ENCODE measurements at regions of chr6 and their contacts with region 1.

Region 1: GRCh38 chr6:31795616-31796298 is at the start of gene VARS1:
- DNase-seq: peak; percentile 90
- ATAC-seq: peak; percentile 89
- H3K4me3 ChIP-seq: peak within 1 kb of the TSS; percentile 89 to 98 (median 98)
- H3K27ac ChIP-seq: peak within 1 kb of the TSS; percentile 76
- H3K4me1 ChIP-seq: peaks cover 25% of the 10 kb centered on the region
- H3K27me3 ChIP-seq: no peaks in the 10 kb centered on the region; a peak in 1 of 5 replicates
- CTCF ChIP-seq: peak; percentile 98
- EP300 ChIP-seq: no peak
- POLR2A ChIP-seq: peak in 1 of 2 experiments; percentile 46; a peak in 1 of 4 replicates
- RAD21 ChIP-seq: peak; percentile 97
- total RNA-seq, gene VARS1: 56.1 and 59.2 TPM in 2 replicates

Region 2: GRCh38 chr6:31806465-31807272 is 10.9 kb after region 1 on chr6 and contains the start of gene LSM2:
- CTCF ChIA-PET with region 1: interaction called, 3 read pairs
- POLR2A ChIA-PET with region 1: interaction called, 77 read pairs
- in situ Hi-C with region 1: no loop called
- intact Hi-C with region 1: no loop called
- DNase-seq: peak; percentile 96
- ATAC-seq: peak; percentile 92
- H3K4me3 ChIP-seq: peak within 1 kb of the TSS; percentile 82 to 90 (median 84)
- H3K27ac ChIP-seq: peak within 1 kb of the TSS; percentile 94
- H3K4me1 ChIP-seq: peaks cover 37% of the 10 kb centered on the region
- H3K27me3 ChIP-seq: no peaks in the 10 kb centered on the region
- CTCF ChIP-seq: peak; percentile 89
- EP300 ChIP-seq: peak in 1 of 2 experiments; percentile 43; a peak in 2 of 4 replicates
- POLR2A ChIP-seq: peak; percentile 75 to 89
- RAD21 ChIP-seq: peak; percentile 69
- total RNA-seq, gene LSM2: 90.5 and 93.7 TPM in 2 replicates

Region 3: DNA sequence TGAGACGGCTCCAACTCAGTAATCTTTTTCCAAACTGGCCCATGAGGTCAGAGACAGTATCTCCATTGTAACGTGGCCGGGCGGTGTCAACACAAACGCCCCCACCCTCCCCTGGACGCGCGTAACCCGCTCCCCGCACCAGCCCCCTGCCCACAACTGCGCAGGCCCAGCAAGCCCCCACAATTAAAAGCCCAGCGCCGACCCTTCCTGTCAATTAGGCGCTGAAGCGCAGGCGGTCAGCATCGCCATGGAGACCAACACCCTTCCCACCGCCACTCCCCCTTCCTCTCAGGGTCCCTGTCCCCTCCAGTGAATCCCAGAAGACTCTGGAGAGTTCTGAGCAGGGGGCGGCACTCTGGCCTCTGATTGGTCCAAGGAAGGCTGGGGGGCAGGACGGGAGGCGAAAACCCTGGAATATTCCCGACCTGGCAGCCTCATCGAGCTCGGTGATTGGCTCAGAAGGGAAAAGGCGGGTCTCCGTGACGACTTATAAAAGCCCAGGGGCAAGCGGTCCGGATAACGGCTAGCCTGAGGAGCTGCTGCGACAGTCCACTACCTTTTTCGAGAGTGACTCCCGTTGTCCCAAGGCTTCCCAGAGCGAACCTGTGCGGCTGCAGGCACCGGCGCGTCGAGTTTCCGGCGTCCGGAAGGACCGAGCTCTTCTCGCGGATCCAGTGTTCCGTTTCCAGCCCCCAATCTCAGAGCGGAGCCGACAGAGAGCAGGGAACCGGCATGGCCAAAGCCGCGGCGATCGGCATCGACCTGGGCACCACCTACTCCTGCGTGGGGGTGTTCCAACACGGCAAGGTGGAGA is 19.5 kb after region 1 on chr6 and contains the starts of genes HSPA1A and HSPA1L:
- CTCF ChIA-PET with region 1: no interaction called
- POLR2A ChIA-PET with region 1: interaction called, 38 read pairs
- in situ Hi-C with region 1: no loop called
- intact Hi-C with region 1: loop called (anchors 2 kb)
- DNase-seq: peak; percentile 95
- ATAC-seq: peak; percentile 64
- H3K4me3 ChIP-seq: peak within 1 kb of the TSS; percentile 54 to 71 (median 55)
- H3K27ac ChIP-seq: peak within 1 kb of the TSS; percentile 95
- H3K4me1 ChIP-seq: peaks cover 35% of the 10 kb centered on the region
- H3K27me3 ChIP-seq: no peaks in the 10 kb centered on the region
- CTCF ChIP-seq: no peak
- EP300 ChIP-seq: peak in 1 of 2 experiments; percentile 63; a peak in 2 of 4 replicates
- POLR2A ChIP-seq: peak; percentile 99 to 100
- RAD21 ChIP-seq: peak; percentile 22; the same call in 1 of the 2 replicates
- total RNA-seq, gene HSPA1A: 83.5 and 85.0 TPM in 2 replicates
- total RNA-seq, gene HSPA1L: 0.55 and 0.94 TPM in 2 replicates

Region 4: GRCh38 chr6:31822036-31822821 is 26.5 kb after region 1 on chr6:
- CTCF ChIA-PET with region 1: no interaction called
- POLR2A ChIA-PET with region 1: interaction called, 61 read pairs
- in situ Hi-C with region 1: no loop called
- intact Hi-C with region 1: no loop called
- DNase-seq: peak; percentile 67
- ATAC-seq: peak; percentile 47
- H3K4me3 ChIP-seq: peak overlapping the region; percentile 67 to 91 (median 87)
- H3K27ac ChIP-seq: peak overlapping the region; percentile 86
- H3K4me1 ChIP-seq: peaks cover 67% of the 10 kb centered on the region
- H3K27me3 ChIP-seq: no peaks in the 10 kb centered on the region
- CTCF ChIP-seq: 0 out of 2 replicates have a peak, but pooled peaks have one; percentile 13
- EP300 ChIP-seq: peak in 1 of 2 experiments; percentile 65; a peak in 2 of 4 replicates
- POLR2A ChIP-seq: peak in 1 of 2 experiments; percentile 33; a peak in 2 of 4 replicates
- RAD21 ChIP-seq: no peak

Measured in HepG2 (cell line).